HepG2 (cell line): ENCODE measurements at regions of chr17 and their contacts with region 1.

Region 1: DNA sequence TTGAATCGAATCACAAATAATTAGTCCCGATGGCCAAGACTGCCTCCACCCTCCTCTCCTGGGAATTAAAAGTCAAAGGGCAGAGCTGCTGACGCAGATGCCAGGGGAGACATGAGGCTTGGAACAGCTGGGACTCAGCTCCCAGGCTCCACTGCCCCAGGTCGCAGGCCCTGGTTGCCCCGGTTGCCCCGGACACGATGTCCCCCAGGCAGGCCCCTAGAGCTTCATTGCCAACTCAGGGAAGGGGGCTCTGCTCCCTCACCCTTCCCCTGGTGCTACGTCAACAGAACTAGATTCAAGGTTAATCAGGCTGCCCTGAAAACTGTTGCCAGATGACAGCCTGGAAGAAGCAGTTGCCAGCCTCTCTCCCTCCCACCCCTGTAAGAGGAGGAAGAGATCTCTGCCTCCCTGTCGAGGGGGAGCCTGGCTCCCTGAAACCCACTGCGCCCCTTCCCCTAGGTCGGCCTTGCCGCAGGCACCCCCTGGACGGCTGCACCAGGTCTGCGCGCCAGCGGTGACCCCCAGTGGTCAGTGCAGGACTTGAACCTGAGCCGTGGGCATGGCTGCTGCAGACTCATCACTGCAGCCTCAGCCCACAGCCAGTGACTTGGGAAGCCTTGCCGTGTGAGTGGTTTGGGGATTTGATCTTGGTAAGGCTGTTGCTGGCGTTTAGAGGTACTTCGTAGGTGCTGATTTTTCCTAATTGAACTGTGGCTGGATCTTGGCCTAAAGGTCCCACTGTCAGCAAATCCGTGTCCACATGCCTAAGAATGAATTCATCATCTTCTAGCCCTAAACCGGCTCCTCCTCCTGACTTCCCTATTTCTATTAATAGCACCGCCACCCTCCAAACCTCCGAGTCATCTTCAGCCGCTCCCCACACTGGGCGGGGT is 84.1 kb upstream of the TOB1 start:
- DNase-seq: peak; percentile 65
- ATAC-seq: peak; percentile 81
- H3K4me3 ChIP-seq: peak overlapping the region; percentile 10 to 69 (median 27); a peak in 5 of 6 replicates
- H3K27ac ChIP-seq: peak overlapping the region; percentile 34
- H3K4me1 ChIP-seq: peaks cover 85% of the 10 kb centered on the region
- H3K27me3 ChIP-seq: no peaks in the 10 kb centered on the region
- CTCF ChIP-seq: peak; percentile 100
- EP300 ChIP-seq: no peak
- POLR2A ChIP-seq: no peak
- RAD21 ChIP-seq: peak; percentile 100

Region 2: GRCh38 chr17:50547035-50547735 is 403.1 kb before region 1 on chr17 and contains the start of gene SPATA20:
- CTCF ChIA-PET with region 1: no interaction called
- POLR2A ChIA-PET with region 1: no interaction called
- in situ Hi-C with region 1: loop called (anchors 10 kb)
- intact Hi-C with region 1: loop called (anchors 10 kb)
- DNase-seq: peak; percentile 88
- ATAC-seq: peak; percentile 76
- H3K4me3 ChIP-seq: peak within 1 kb of the TSS; percentile 63 to 87 (median 79)
- H3K27ac ChIP-seq: peak within 1 kb of the TSS; percentile 62
- H3K4me1 ChIP-seq: peaks cover 74% of the 10 kb centered on the region
- H3K27me3 ChIP-seq: no peaks in the 10 kb centered on the region; a peak in 1 of 5 replicates
- CTCF ChIP-seq: peak; percentile 99
- EP300 ChIP-seq: peak in 1 of 2 experiments; percentile 31; a peak in 1 of 4 replicates
- POLR2A ChIP-seq: peak; percentile 81 to 89
- RAD21 ChIP-seq: peak; percentile 100
- total RNA-seq, gene SPATA20: 35.7 and 64.8 TPM in 2 replicates

Region 3: GRCh38 chr17:50816771-50817751 is 133.2 kb before region 1 on chr17:
- CTCF ChIA-PET with region 1: interaction called, 4 read pairs
- POLR2A ChIA-PET with region 1: no interaction called
- in situ Hi-C with region 1: no loop called
- intact Hi-C with region 1: loop called (anchors 1 kb)
- DNase-seq: no peak
- ATAC-seq: peak; percentile 78
- H3K4me3 ChIP-seq: peak overlapping the region in 1 of 3 experiments; percentile 50; a peak in 2 of 6 replicates
- H3K27ac ChIP-seq: no peak overlapping the region
- H3K4me1 ChIP-seq: peaks cover 27% of the 10 kb centered on the region
- H3K27me3 ChIP-seq: peaks cover 0 to 33% of the 10 kb centered on the region in 2 experiments; a peak in 4 of 5 replicates
- CTCF ChIP-seq: peak; percentile 92
- EP300 ChIP-seq: no peak
- POLR2A ChIP-seq: no peak
- RAD21 ChIP-seq: peak; percentile 71

Region 4: GRCh38 chr17:50976951-50977472 is 26.8 kb after region 1 on chr17:
- CTCF ChIA-PET with region 1: no interaction called
- POLR2A ChIA-PET with region 1: no interaction called
- in situ Hi-C with region 1: no loop called
- intact Hi-C with region 1: no loop called
- DNase-seq: no peak
- ATAC-seq: no peak
- H3K4me3 ChIP-seq: no peak overlapping the region
- H3K27ac ChIP-seq: peak overlapping the region; percentile 58
- H3K4me1 ChIP-seq: peaks cover 42% of the 10 kb centered on the region
- H3K27me3 ChIP-seq: no peaks in the 10 kb centered on the region
- CTCF ChIP-seq: no peak
- EP300 ChIP-seq: no peak
- POLR2A ChIP-seq: no peak
- RAD21 ChIP-seq: no peak